ENCODE measurements at regions of chr22 and their contacts with region 1.

Region 1: DNA sequence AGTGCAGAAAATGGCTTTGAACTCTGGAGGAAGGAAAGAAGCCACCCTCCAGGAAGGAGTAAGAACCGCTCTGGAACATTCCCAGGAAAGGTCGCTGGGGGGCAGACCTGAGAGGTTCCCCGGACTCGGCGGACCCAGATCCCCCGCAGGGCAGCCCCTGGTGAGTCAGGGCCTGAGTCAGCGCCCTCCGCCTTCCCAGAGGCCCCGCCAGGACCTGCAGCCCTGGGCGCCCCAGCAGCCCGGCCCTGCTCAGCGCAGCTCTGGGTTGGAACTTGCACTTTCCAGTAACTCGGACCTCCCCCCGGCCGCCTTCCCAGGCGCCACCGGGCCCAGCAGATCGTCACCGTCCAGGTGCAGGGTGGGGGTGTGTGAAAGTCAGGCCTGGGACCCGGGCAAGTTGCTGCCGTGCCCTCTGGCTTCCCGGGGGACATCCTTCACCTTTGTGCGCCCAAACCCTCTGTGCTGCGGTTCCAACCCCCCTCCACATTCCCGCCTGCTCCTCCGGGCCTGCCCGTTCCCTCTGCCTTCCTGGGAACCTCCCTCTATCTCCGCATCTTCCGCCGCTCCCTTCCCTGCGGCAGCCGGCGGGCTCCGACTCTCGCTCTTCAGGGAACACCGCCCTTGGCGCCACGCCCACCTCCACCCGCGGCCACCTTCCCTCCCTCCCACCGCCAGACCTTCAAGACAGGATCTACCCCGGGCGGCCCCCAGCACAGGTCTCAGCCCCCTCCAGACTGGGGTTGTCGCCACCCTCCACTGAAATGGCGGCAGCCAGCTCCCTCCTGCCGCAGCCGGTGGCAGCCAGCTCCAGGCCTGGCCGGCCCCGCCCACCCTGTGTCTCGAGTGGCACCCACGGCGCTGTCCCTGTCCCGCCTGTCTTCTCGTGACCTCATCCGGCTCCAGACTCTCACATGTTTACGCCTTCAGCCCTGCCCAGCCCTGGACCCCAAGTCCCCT is 36.8 kb upstream of the WNT7B start:
- DNase-seq: peak; percentile 87 to 97
- H3K4me3 ChIP-seq: peak overlapping the region; percentile 51
- H3K4me1 ChIP-seq: peaks cover 9% of the 10 kb centered on the region
- H3K27me3 ChIP-seq: no peaks in the 10 kb centered on the region

Region 2: GRCh38 chr22:45671051-45671767 is 342.5 kb before region 1 on chr22:
- in situ Hi-C with region 1: no loop called
- DNase-seq: no peak
- H3K4me3 ChIP-seq: peak overlapping the region; percentile 89
- H3K4me1 ChIP-seq: peaks cover 13% of the 10 kb centered on the region
- H3K27me3 ChIP-seq: no peaks in the 10 kb centered on the region

Region 3: DNA sequence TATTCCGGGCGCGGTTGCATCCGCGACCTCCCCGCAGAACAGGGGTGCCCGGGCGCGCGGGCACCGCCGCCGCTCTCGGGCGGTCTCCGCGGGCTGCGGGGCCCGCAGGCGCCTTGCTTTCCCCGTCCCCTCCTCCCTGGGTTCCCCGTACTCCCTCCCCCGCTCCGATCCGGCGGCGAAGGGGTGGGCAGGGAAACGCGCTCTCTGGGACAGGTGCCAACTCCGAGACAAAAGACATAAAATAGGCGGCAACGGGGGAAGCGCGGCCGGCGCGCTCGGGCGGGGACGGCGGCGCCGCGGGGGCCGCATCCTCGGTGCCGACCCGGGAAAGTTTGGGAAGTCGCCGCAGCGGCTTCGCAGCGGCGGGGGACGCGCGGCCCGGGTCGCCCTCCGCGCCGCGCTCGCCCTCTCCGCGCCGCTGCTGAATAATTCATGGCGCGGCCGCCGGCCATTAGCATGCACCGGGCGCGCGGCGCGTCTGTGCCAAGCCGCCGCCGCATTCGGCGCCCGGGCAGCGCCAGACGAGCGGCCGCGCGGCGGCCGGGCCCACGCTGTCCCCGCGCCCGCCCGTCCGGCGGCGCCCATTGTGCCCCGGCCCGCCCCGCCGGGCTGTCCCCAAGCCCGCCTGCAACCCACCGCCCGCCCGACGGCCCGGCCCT is 57.8 kb after region 1 on chr22:
- in situ Hi-C with region 1: loop called (anchors 10 kb)
- DNase-seq: peak; percentile 91 to 96
- H3K4me3 ChIP-seq: peak overlapping the region; percentile 84
- H3K4me1 ChIP-seq: peaks cover 34% of the 10 kb centered on the region
- H3K27me3 ChIP-seq: no peaks in the 10 kb centered on the region

Region 4: GRCh38 chr22:46116491-46116958 is 102.8 kb after region 1 on chr22:
- in situ Hi-C with region 1: loop called (anchors 5 kb)
- DNase-seq: peak; percentile 71 to 96
- H3K4me3 ChIP-seq: no peak overlapping the region
- H3K4me1 ChIP-seq: no peaks in the 10 kb centered on the region
- H3K27me3 ChIP-seq: no peaks in the 10 kb centered on the region